A673 (cell line): ENCODE measurements at regions of chr16 and their contacts with region 1.

Region 1: DNA sequence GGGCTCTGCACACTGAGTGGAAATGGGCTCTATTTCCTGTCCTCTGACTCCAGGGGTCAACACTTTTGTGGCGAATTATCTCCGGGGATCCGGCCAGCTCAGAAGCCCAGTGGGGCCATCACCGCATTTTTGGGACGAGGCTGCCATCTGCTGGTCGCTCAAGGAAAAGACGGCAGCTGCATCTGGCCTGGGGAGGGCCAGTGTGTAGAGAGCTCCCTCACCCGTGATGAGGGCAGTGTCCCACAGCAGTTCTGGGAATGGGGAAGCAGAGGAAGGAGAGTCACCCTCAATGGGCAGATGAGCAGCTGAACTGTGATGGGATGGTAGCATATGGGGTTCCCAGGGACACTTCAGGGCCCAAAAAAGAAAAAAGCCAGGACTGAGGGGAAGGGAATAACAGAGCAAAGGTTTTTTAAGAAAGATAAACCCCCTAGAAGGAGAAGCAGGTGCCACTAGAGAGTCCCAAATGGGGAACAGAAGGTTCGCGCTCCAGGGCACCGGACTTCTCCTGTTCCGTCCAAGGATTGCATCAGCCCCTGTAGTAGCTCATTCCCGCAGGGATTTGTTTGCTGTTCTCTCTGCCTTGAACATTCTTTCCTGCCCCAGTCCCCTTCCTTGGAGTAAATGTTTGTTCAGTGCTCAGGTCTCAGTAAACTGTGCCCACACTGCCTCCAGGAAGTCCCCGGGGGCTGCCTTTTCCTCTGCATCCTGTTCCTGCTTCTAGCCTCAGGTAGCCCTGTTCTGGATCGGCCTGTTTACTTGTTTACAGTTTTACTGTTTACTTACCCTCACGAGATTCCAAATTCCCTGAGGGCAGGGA is 9.3 kb upstream of the ABCC12 start:
- DNase-seq: peak; percentile 67
- H3K4me3 ChIP-seq: no peak overlapping the region
- H3K27ac ChIP-seq: peak overlapping the region; percentile 10
- H3K4me1 ChIP-seq: no peaks in the 10 kb centered on the region
- H3K27me3 ChIP-seq: no peaks in the 10 kb centered on the region
- CTCF ChIP-seq: peak; percentile 90

Region 2: GRCh38 chr16:46555951-46556350 is 1609.2 kb before region 1 on chr16:
- CTCF ChIA-PET with region 1: interaction called, 3 read pairs
- POLR2A ChIA-PET with region 1: no interaction called
- intact Hi-C with region 1: loop called (anchors 10 kb)
- DNase-seq: no peak
- H3K4me3 ChIP-seq: no peak overlapping the region
- H3K27ac ChIP-seq: no peak overlapping the region
- H3K4me1 ChIP-seq: no peaks in the 10 kb centered on the region
- H3K27me3 ChIP-seq: no peaks in the 10 kb centered on the region
- CTCF ChIP-seq: no peak

Region 3: GRCh38 chr16:46853713-46854443 is 1311.2 kb before region 1 on chr16:
- CTCF ChIA-PET with region 1: interaction called, 4 read pairs
- POLR2A ChIA-PET with region 1: no interaction called
- intact Hi-C with region 1: loop called (anchors 5 kb)
- DNase-seq: peak; percentile 79
- H3K4me3 ChIP-seq: no peak overlapping the region
- H3K27ac ChIP-seq: no peak overlapping the region
- H3K4me1 ChIP-seq: no peaks in the 10 kb centered on the region
- H3K27me3 ChIP-seq: no peaks in the 10 kb centered on the region
- CTCF ChIP-seq: peak; percentile 84

Region 4: GRCh38 chr16:46947900-46948547 is 1217.1 kb before region 1 on chr16:
- CTCF ChIA-PET with region 1: no interaction called
- POLR2A ChIA-PET with region 1: no interaction called
- intact Hi-C with region 1: loop called (anchors 2 kb)
- DNase-seq: peak; percentile 50
- H3K4me3 ChIP-seq: no peak overlapping the region
- H3K27ac ChIP-seq: no peak overlapping the region
- H3K4me1 ChIP-seq: no peaks in the 10 kb centered on the region
- H3K27me3 ChIP-seq: no peaks in the 10 kb centered on the region
- CTCF ChIP-seq: peak; percentile 58

Region 5: GRCh38 chr16:48047720-48048119 is 117.4 kb before region 1 on chr16:
- CTCF ChIA-PET with region 1: no interaction called
- POLR2A ChIA-PET with region 1: no interaction called
- intact Hi-C with region 1: no loop called
- DNase-seq: no peak
- H3K4me3 ChIP-seq: no peak overlapping the region
- H3K27ac ChIP-seq: no peak overlapping the region
- H3K4me1 ChIP-seq: no peaks in the 10 kb centered on the region
- H3K27me3 ChIP-seq: peaks cover 35% of the 10 kb centered on the region
- CTCF ChIP-seq: no peak